ENCODE measurements at regions of chr19 and their contacts with region 1.

Region 1: GRCh38 chr19:38514812-38515633 is 81.5 kb downstream of the RYR1 start:
- DNase-seq: peak; percentile 83 to 98
- ATAC-seq: peak; percentile 78 to 94
- H3K4me3 ChIP-seq: no peak overlapping the region
- H3K27ac ChIP-seq: peak overlapping the region; percentile 15 to 54; a peak in 4 of 6 replicates
- H3K4me1 ChIP-seq: peaks cover 8% of the 10 kb centered on the region; the same call in 2 of the 3 replicates
- CTCF ChIP-seq: peak; percentile 99
- EP300 ChIP-seq: no peak
- POLR2A ChIP-seq: no peak
- RAD21 ChIP-seq: peak; percentile 98 to 99

Region 2: GRCh38 chr19:38457690-38458405 is 57.2 kb before region 1 on chr19:
- CTCF ChIA-PET with region 1: no interaction called
- POLR2A ChIA-PET with region 1: no interaction called
- DNase-seq: no peak
- ATAC-seq: peak; percentile 6 to 21; a peak in 2 of 6 replicates
- H3K4me3 ChIP-seq: no peak overlapping the region
- H3K27ac ChIP-seq: no peak overlapping the region
- H3K4me1 ChIP-seq: no peaks in the 10 kb centered on the region
- CTCF ChIP-seq: no peak
- EP300 ChIP-seq: no peak
- POLR2A ChIP-seq: 0 out of 2 replicates have a peak, but pooled peaks have one; percentile 4
- RAD21 ChIP-seq: no peak

Region 3: DNA sequence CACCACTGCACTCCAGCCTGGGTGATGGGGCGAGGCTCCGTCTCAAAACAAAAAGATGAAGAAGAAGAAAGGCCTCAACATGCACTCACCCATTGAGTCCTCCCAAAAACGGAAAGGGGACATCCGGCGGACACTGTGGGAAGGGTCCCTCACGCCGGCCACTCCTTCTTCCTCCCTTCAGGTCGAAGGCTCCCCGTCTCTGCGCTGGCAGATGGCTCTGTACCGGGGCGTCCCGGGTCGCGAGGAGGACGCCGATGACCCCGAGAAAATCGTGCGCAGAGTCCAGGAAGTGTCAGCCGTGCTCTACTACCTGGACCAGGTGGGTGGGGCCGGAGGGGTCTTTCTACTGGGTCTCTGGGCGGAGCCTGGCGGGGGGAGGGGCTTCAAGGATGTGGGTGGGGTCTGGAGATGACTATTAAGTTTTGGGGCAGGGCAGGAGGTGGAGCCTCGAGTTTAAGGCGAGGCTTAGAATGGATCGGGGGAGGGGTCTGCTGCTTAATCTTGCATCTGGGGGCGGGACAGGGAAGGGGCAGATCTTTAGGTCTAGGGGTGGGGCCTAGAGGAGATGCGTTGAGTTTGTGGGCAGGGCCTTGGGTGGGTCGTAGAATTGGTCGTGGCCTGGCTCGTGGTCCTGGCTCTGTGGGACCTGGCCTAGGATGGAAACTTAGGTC is 12.6 kb after region 1 on chr19:
- CTCF ChIA-PET with region 1: interaction called, 145 read pairs
- POLR2A ChIA-PET with region 1: no interaction called
- DNase-seq: peak in 1 of 2 experiments; percentile 55
- ATAC-seq: peak in 1 of 2 experiments; percentile 12; a peak in 3 of 6 replicates
- H3K4me3 ChIP-seq: no peak overlapping the region
- H3K27ac ChIP-seq: peak overlapping the region in 1 of 2 experiments; percentile 0; a peak in 1 of 6 replicates
- H3K4me1 ChIP-seq: peaks cover 5% of the 10 kb centered on the region; the same call in 2 of the 3 replicates
- CTCF ChIP-seq: no peak
- EP300 ChIP-seq: no peak
- POLR2A ChIP-seq: no peak
- RAD21 ChIP-seq: no peak

Region 4: DNA sequence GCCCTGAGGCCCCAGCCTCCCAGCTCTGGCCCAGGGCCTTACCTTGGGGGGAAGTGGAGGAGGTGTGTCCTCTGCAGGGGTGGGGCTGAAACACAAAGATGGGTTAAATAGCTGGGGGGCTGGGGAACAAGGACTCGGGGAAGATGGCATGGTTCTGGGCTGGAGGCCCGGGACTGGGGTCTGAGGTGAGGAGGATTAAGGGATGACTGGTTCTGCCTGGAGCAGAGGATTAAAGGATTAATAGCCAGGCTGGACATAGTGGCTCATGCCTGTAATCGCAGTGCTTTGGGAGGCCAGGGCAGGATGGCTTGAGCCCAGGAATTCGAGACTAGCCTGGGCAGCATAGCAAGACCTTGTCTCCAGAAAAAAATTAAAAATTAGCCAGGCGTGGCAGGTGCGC is 91.1 kb after region 1 on chr19:
- CTCF ChIA-PET with region 1: interaction called, 19 read pairs
- POLR2A ChIA-PET with region 1: no interaction called
- DNase-seq: no peak
- ATAC-seq: peak; percentile 14 to 29; a peak in 3 of 6 replicates
- H3K4me3 ChIP-seq: no peak overlapping the region
- H3K27ac ChIP-seq: no peak overlapping the region
- H3K4me1 ChIP-seq: no peaks in the 10 kb centered on the region; the same call in 2 of the 3 replicates
- CTCF ChIP-seq: no peak
- EP300 ChIP-seq: no peak
- POLR2A ChIP-seq: no peak
- RAD21 ChIP-seq: no peak

Region 5: GRCh38 chr19:38877781-38878574 is 363.0 kb after region 1 on chr19 and contains the start of gene RINL:
- CTCF ChIA-PET with region 1: interaction called, 16 read pairs
- POLR2A ChIA-PET with region 1: no interaction called
- DNase-seq: no peak
- ATAC-seq: peak; percentile 17 to 20; a peak in 4 of 6 replicates
- H3K4me3 ChIP-seq: no peak within 1 kb of the TSS
- H3K27ac ChIP-seq: peak within 1 kb of the TSS; percentile 28 to 63
- H3K4me1 ChIP-seq: peaks cover 4% of the 10 kb centered on the region; the same call in 2 of the 3 replicates
- CTCF ChIP-seq: no peak
- EP300 ChIP-seq: no peak
- POLR2A ChIP-seq: no peak
- RAD21 ChIP-seq: no peak
- polyA plus RNA-seq, gene RINL: 6.3 and 6.6 TPM in 2 replicates

Region 6: GRCh38 chr19:38917516-38918491 is 402.8 kb after region 1 on chr19:
- CTCF ChIA-PET with region 1: interaction called, 31 read pairs
- POLR2A ChIA-PET with region 1: no interaction called
- DNase-seq: peak; percentile 75 to 90
- ATAC-seq: peak; percentile 72 to 84
- H3K4me3 ChIP-seq: no peak overlapping the region
- H3K27ac ChIP-seq: peak overlapping the region in 1 of 2 experiments; percentile 14; a peak in 1 of 6 replicates
- H3K4me1 ChIP-seq: 0 out of 3 replicates have a peak, but pooled peaks cover 5% of the 10 kb centered on the region
- CTCF ChIP-seq: peak; percentile 49
- EP300 ChIP-seq: no peak
- POLR2A ChIP-seq: no peak
- RAD21 ChIP-seq: peak; percentile 48 to 59

Measured in A549 (cell line).